HepG2 (cell line): ENCODE measurements at regions of chr16 and their contacts with region 1.

Region 1: GRCh38 chr16:50368410-50369132 is at the start of gene BRD7:
- DNase-seq: peak; percentile 62
- ATAC-seq: peak; percentile 71
- H3K4me3 ChIP-seq: peak within 1 kb of the TSS; percentile 78 to 87 (median 86)
- H3K27ac ChIP-seq: peak within 1 kb of the TSS; percentile 68
- H3K4me1 ChIP-seq: peaks cover 72% of the 10 kb centered on the region
- H3K27me3 ChIP-seq: no peaks in the 10 kb centered on the region; a peak in 1 of 5 replicates
- CTCF ChIP-seq: peak; percentile 48; the same call in 1 of the 2 replicates
- EP300 ChIP-seq: no peak
- POLR2A ChIP-seq: no peak
- RAD21 ChIP-seq: no peak; the same call in 1 of the 2 replicates
- total RNA-seq, gene BRD7: 149 and 169 TPM in 2 replicates

Region 2: GRCh38 chr16:50245417-50246298 is 122.9 kb before region 1 on chr16:
- CTCF ChIA-PET with region 1: no interaction called
- POLR2A ChIA-PET with region 1: no interaction called
- in situ Hi-C with region 1: loop called (anchors 10 kb)
- intact Hi-C with region 1: no loop called
- DNase-seq: peak; percentile 16
- ATAC-seq: peak; percentile 67
- H3K4me3 ChIP-seq: peak overlapping the region; percentile 79 to 85 (median 81)
- H3K27ac ChIP-seq: no peak overlapping the region
- H3K4me1 ChIP-seq: peaks cover 25% of the 10 kb centered on the region
- H3K27me3 ChIP-seq: peaks cover 0 to 29% of the 10 kb centered on the region in 2 experiments; a peak in 4 of 5 replicates
- CTCF ChIP-seq: peak; percentile 37; the same call in 1 of the 2 replicates
- EP300 ChIP-seq: no peak
- POLR2A ChIP-seq: no peak
- RAD21 ChIP-seq: peak; percentile 36; the same call in 1 of the 2 replicates

Region 3: GRCh38 chr16:50335196-50335958 is 33.2 kb before region 1 on chr16:
- CTCF ChIA-PET with region 1: no interaction called
- POLR2A ChIA-PET with region 1: no interaction called
- in situ Hi-C with region 1: no loop called
- intact Hi-C with region 1: no loop called
- DNase-seq: no peak
- ATAC-seq: no peak
- H3K4me3 ChIP-seq: no peak overlapping the region
- H3K27ac ChIP-seq: no peak overlapping the region
- H3K4me1 ChIP-seq: peaks cover 25% of the 10 kb centered on the region
- H3K27me3 ChIP-seq: no peaks in the 10 kb centered on the region
- CTCF ChIP-seq: no peak
- EP300 ChIP-seq: no peak
- POLR2A ChIP-seq: no peak
- RAD21 ChIP-seq: no peak

Region 4: DNA sequence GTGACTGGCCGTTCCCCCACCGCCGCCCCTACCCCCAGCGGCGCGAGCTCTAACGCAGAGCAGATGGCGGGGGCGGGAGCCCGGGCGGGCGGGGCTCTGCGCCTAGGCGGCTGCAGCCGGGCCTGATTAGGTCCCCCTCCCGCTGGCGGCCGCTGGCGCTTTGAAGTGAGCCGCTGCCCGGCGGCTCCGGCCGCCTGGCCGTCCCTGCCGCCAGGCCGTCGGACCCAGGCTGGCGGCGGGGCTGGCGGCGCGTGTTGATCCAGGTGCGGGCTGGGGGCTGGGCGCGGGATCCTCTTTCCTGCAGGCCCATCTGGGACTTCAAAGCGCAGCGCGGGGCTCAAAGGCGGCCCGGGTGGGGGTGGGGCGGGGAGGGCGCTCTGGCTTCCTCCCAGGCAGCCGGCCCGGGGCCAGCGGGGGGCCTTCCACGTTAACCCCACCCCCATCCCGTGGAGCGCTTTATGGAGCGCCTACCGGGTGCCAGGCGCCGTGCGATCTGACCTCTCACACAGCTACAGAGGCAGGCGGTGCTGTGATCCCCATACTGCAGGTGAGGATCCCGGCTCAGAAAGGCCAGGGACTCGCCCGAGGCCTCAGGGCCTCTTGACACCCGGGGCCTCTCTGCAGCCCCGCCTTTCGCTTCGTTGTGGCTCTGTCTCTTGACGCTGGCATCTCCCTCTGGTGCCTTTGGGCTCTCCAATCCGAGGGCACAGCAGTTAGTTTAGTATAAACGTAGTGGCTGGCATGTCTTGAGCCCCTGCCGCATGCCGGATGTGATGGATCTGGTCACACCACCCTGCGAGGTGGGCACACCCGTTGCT is 99.6 kb after region 1 on chr16:
- CTCF ChIA-PET with region 1: no interaction called
- POLR2A ChIA-PET with region 1: interaction called, 4 read pairs
- in situ Hi-C with region 1: no loop called
- intact Hi-C with region 1: loop called (anchors 5 kb)
- DNase-seq: peak; percentile 97
- ATAC-seq: peak; percentile 89
- H3K4me3 ChIP-seq: peak overlapping the region in 2 of 3 experiments; percentile 11 to 24; a peak in 2 of 6 replicates
- H3K27ac ChIP-seq: peak overlapping the region; percentile 92
- H3K4me1 ChIP-seq: peaks cover 91% of the 10 kb centered on the region
- H3K27me3 ChIP-seq: no peaks in the 10 kb centered on the region
- CTCF ChIP-seq: peak; percentile 49
- EP300 ChIP-seq: peak; percentile 97 to 100
- POLR2A ChIP-seq: peak; percentile 63 to 67
- RAD21 ChIP-seq: peak; percentile 81

Region 5: GRCh38 chr16:50520451-50521245 is 152.1 kb after region 1 on chr16:
- CTCF ChIA-PET with region 1: no interaction called
- POLR2A ChIA-PET with region 1: interaction called, 9 read pairs
- in situ Hi-C with region 1: no loop called
- intact Hi-C with region 1: loop called (anchors 5 kb)
- DNase-seq: peak; percentile 99
- ATAC-seq: peak; percentile 94
- H3K4me3 ChIP-seq: no peak overlapping the region; a peak in 1 of 6 replicates
- H3K27ac ChIP-seq: peak overlapping the region; percentile 89
- H3K4me1 ChIP-seq: peaks cover 65% of the 10 kb centered on the region
- H3K27me3 ChIP-seq: no peaks in the 10 kb centered on the region
- CTCF ChIP-seq: no peak
- EP300 ChIP-seq: peak; percentile 98 to 100; a peak in 3 of 4 replicates
- POLR2A ChIP-seq: peak in 1 of 2 experiments; percentile 32; a peak in 2 of 4 replicates
- RAD21 ChIP-seq: no peak

Region 6: DNA sequence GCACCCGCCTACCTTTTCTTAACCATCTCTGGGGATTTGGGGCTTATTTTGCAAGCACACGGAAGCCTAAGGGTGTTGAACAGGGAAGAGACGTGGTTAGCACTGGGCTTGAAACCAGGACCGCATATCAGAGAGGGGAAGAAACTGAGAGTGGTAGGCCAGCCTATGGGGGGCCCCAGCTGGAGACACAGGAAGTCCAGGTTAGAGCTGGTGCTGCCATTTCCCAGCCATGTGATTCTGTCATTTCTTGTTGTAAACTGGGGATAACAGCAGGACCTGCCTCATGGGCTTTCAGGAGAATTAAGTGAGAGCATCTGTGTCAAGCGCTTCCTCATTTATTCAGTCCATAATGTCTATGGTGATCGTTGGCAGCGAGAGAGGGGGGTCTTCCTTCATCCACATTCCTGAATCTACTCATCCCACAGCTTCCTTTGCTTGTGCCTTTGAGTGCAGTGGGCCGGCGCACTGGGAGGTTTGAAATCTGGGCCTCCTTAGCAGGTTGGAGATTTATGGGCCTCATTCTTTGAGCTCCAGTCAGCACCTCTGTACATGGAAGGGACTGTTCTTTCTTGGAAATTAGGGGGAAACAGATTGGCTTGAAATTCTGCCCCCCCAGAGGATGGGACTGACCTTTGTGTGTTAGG is 199.7 kb after region 1 on chr16:
- CTCF ChIA-PET with region 1: no interaction called
- POLR2A ChIA-PET with region 1: interaction called, 4 read pairs
- in situ Hi-C with region 1: no loop called
- intact Hi-C with region 1: loop called (anchors 5 kb)
- DNase-seq: no peak
- ATAC-seq: no peak
- H3K4me3 ChIP-seq: no peak overlapping the region
- H3K27ac ChIP-seq: no peak overlapping the region
- H3K4me1 ChIP-seq: peaks cover 96% of the 10 kb centered on the region
- H3K27me3 ChIP-seq: no peaks in the 10 kb centered on the region
- CTCF ChIP-seq: no peak
- EP300 ChIP-seq: no peak
- POLR2A ChIP-seq: no peak; a peak in 1 of 4 replicates
- RAD21 ChIP-seq: no peak

Region 7: DNA sequence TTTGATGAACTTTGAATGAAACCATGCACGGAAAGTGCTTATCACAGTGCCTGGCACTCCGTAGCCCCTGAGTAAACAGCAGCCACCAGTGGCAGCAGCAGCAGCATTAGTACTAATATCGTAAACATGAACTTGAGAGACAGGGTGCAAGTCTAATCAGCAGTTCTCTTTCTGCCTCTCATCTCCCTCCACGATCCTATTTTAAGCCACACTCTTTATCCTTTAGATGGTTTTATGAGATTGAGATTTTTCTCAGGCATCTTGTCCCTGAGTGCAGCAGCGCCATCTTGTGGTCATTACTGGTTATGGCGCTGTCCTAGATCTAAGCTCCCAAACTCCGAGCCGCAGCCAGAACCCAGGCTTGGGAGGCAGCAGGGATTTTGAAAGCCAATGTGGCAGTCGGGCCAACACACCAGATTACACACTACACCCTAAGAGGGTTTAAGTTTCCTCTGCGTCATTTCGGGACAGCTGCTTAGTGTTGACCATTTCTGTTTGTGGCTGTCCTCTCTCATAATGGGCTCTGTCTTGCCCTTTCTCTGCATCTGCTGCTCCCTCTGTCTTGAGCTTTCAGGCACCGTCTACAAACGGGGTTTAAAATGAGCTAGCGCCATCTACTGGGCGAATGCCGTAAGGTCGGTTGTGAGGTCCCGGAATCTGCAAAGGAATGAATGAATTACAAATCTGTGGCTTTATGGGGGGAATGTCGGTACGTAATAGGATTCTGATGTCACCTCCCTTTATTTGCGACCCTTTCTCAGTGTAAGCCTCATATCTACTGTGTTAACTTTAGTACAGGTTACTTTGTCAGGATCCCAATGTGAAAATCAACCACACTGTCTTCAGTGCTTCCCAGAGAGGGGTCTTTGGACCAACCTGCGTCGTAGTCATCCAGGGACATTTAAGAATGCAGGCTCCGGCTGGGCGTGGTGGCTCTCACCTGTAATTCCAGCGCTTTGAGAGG is 437.8 kb after region 1 on chr16:
- CTCF ChIA-PET with region 1: no interaction called
- POLR2A ChIA-PET with region 1: interaction called, 4 read pairs
- in situ Hi-C with region 1: loop called (anchors 5 kb)
- intact Hi-C with region 1: no loop called
- DNase-seq: peak; percentile 88
- ATAC-seq: peak; percentile 82
- H3K4me3 ChIP-seq: peak overlapping the region; percentile 24 to 60 (median 39); a peak in 5 of 6 replicates
- H3K27ac ChIP-seq: peak overlapping the region; percentile 6
- H3K4me1 ChIP-seq: peaks cover 39% of the 10 kb centered on the region
- H3K27me3 ChIP-seq: no peaks in the 10 kb centered on the region
- CTCF ChIP-seq: peak; percentile 87
- EP300 ChIP-seq: no peak
- POLR2A ChIP-seq: no peak
- RAD21 ChIP-seq: peak; percentile 81

Region 8: GRCh38 chr16:50862818-50863643 is 494.5 kb after region 1 on chr16:
- CTCF ChIA-PET with region 1: no interaction called
- POLR2A ChIA-PET with region 1: no interaction called
- in situ Hi-C with region 1: no loop called
- intact Hi-C with region 1: no loop called
- DNase-seq: no peak
- ATAC-seq: 0 out of 3 replicates have a peak, but pooled peaks have one; percentile 12
- H3K4me3 ChIP-seq: no peak overlapping the region
- H3K27ac ChIP-seq: no peak overlapping the region
- H3K4me1 ChIP-seq: peaks cover 37% of the 10 kb centered on the region
- H3K27me3 ChIP-seq: no peaks in the 10 kb centered on the region
- CTCF ChIP-seq: peak; percentile 36; the same call in 1 of the 2 replicates
- EP300 ChIP-seq: no peak
- POLR2A ChIP-seq: no peak
- RAD21 ChIP-seq: no peak